GM10248 (cell line): ENCODE measurements at regions of chr7 and their contacts with region 1.

Region 1: DNA sequence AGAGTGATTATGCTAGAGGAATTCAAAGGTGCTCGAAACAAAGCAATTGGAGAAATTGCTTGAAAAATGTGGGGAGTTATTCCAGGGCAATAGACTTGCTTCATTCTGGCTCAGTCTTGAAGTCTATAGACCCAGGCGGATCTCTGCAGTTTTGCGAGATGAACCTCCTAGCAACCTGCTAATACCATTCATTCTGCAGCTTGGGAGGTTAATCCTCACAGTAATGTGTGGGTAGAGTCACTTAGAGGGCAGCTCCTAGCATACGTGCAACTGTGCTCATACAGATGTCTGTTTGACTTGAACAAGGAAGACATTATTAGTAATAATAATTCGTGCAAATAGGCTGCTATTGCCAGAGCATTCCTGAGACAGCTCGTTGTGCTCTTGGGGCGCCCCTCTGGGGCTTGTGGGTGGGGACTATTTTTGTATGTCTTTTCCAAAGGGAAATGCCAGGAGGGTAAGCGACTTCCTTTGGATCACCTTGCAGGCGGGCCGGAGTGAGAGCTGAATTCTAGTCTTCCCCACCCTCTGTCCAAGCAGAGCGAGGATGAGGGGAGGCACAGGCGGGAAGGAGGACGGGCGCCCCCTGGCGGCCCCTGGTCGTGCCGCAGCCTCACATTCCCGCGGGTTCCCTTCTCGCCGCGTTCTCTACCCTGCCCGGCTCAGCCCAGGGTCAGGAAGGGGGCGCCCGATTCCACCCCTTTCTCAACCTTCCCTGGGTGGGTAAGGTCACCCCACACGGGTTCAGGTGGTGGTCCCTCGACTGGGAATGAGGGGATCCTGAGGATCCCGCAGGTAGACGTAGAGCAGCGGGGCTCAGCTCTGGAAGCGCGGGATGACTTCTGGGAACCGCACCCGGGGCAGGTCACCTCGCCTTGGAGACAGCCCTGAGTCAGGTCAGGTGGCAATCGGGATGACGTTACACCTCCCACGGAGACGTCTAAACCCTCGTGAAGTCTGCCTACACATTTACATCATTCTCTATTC is 241.5 kb downstream of the PHTF2 start:
- DNase-seq: peak; percentile 78
- CTCF ChIP-seq: peak; percentile 81

Region 2: GRCh38 chr7:77798394-77799077 is 241.5 kb before region 1 on chr7 and contains the starts of genes PHTF2 and TMEM60:
- CTCF ChIA-PET with region 1: no interaction called
- POLR2A ChIA-PET with region 1: no interaction called
- DNase-seq: peak; percentile 94
- CTCF ChIP-seq: peak; percentile 54

Region 3: DNA sequence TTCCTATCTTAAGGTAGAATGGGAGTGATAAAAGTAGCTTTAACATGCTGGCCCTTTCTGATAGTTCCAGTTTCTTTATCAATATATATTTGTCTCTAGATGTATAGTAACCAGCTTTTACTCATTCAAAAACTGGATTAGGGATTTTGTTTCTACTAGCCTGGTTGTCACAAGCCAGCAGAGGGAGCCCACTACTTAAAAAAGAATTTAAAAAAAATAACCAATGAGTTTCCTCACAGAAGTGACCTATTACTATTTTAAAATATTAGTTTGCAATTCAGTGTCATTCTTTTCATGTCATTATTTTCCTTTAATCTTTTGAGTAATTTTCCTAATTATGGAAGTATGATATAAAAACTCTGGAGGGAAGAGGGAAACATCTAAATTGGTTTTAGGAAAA is 99.4 kb before region 1 on chr7:
- CTCF ChIA-PET with region 1: interaction called, 18 read pairs
- POLR2A ChIA-PET with region 1: no interaction called
- DNase-seq: peak; percentile 36
- CTCF ChIP-seq: peak; percentile 32

Region 4: GRCh38 chr7:78020136-78020873 is 19.8 kb before region 1 on chr7:
- CTCF ChIA-PET with region 1: interaction called, 61 read pairs
- POLR2A ChIA-PET with region 1: no interaction called
- DNase-seq: peak; percentile 53
- CTCF ChIP-seq: peak; percentile 57

Region 5: DNA sequence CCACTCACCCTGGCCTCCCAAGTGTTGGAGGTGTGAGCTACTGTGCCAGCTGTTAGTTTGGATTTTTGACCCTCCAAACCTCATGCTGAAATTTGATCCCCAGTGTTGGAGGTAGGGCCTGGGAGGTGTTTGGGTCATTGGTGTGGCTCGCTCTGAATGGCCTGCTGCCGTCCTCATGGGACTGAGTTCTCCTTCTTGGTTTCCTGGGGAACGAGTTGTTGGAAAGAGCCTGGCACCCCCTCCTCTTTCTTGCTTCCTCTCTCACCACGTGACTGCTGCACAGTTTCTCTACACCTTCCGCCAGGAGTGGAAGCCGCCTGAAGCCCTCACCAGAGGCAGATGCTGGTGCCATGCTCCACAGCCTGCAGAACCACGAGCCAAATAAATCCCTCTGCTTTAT is 12.0 kb after region 1 on chr7:
- CTCF ChIA-PET with region 1: interaction called, 26 read pairs
- POLR2A ChIA-PET with region 1: no interaction called
- DNase-seq: no peak
- CTCF ChIP-seq: no peak

Region 6: DNA sequence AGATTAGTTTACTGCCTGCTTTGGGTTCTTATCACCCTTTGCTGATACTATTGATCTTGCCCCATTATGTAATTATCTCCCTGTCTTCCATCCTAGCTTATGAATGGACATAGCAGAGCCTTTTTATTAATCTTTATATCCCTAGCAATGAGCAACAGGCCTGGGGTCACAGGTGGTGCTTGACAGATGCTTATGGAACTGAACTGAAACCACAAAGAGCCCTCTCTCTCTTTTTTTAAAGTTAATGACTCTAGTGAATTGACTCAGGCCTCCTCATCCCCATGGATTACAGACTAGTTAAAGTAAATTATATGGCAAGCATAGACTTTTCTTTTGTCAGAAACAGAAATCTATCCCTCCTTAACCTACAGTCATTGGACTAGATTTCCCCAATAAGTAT is 23.7 kb after region 1 on chr7:
- CTCF ChIA-PET with region 1: interaction called, 13 read pairs
- POLR2A ChIA-PET with region 1: no interaction called
- DNase-seq: no peak
- CTCF ChIP-seq: no peak